Activated CD8-positive, alpha-beta T cell treated with anti-CD3 and anti-CD28 coated beads for 36 hours (primary cell): ENCODE measurements at regions of chr9 and their contacts with region 1.

Region 1: DNA sequence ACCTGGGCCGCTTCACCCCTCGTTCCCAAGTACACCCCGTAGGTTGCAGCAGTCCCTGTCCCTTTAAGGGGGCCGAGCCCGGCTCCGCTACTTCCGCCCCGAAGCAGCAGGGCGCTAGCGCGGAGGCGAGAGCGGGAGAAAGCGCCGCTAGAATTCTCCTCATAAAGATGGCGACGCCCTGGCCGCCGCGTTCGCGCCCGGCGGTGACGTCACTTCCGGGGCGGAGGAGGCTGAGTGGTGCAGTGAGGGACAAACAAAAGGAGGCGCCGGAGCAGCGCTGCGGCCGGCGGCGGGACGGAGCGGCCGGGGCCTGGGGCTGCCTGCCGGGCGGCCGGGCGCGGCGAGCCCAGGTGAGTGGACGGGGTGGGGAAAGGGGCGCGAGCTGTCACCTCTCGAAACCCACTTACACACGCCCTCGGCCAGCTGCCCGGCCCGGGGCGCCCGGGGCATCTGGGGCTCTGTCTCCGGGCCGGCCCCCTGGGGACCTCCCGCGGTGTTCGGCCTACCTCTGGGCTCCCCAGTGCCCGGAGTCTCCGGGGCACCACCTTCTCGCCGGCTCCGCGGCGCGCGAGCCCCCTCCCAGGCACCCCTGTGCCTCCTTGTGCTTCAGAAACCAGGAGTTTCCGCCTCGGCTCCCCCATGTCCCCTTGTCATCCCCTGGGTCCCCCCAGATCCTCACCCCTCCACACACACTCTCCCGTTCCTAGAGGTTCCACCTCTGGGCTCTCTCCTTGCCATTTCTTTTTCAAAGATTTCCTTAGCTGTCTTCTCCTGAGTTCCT is at the starts of genes KYAT1 and LRRC8A:
- DNase-seq: peak; percentile 99
- ATAC-seq: peak; percentile 93
- H3K4me3 Mint-ChIP-seq: peak within 1 kb of the TSS; percentile 87
- H3K27ac Mint-ChIP-seq: peak within 1 kb of the TSS; percentile 92
- H3K4me1 Mint-ChIP-seq: peaks cover 43% of the 10 kb centered on the region
- H3K27me3 Mint-ChIP-seq: no peaks in the 10 kb centered on the region
- CTCF ChIP-seq: no peak
- total RNA-seq, gene KYAT1: 17.0 to 18.6 TPM
- total RNA-seq, gene LRRC8A: 15.1 to 16.2 TPM

Region 2: GRCh38 chr9:128863647-128864046 is 18.4 kb before region 1 on chr9:
- CTCF ChIA-PET with region 1: interaction called, 12 read pairs
- POLR2A ChIA-PET with region 1: interaction called, 3 read pairs
- intact Hi-C with region 1: no loop called
- DNase-seq: peak; percentile 92
- ATAC-seq: peak; percentile 99
- H3K4me3 Mint-ChIP-seq: no peak overlapping the region
- H3K27ac Mint-ChIP-seq: peak overlapping the region; percentile 30
- H3K4me1 Mint-ChIP-seq: peaks cover 5% of the 10 kb centered on the region
- H3K27me3 Mint-ChIP-seq: no peaks in the 10 kb centered on the region
- CTCF ChIP-seq: peak; percentile 98

Region 3: DNA sequence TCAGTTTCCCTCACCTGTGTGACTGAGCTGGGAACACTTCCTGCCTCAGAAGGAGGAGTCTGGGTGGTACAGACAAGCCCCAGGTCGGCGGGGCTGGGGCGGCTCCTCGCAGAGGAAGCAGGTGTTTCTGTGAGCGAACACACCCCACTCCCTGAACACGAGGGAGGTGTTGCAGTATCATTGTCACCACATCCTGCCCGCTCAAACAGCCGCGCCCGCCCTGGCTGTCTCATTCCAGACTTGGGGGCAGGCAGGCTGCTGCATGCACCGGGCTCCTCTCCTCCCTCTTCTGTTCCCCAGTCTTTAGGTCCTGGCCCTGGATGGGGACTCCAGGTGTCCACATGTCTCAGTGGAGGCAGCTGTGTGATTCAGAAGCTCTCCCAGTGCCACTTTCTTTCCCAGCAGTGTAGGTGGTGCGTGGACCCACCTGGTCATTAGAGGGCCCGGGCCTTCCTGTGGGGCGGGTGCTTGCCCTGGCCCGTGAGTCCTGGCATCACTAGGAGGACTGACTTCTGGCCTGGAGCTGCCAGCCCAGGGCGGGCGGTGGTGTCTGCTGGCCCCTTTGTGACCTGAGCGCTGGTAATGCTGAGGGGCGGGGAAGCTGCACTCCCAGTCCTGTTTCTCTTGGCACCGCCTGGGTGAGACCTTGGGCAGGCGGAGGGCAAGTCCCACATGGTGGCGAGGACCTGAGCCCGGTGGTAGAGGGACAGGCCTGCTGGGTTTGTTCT is 20.4 kb after region 1 on chr9:
- CTCF ChIA-PET with region 1: interaction called, 3 read pairs
- POLR2A ChIA-PET with region 1: interaction called, 15 read pairs
- intact Hi-C with region 1: no loop called
- DNase-seq: peak; percentile 94
- ATAC-seq: peak; percentile 90
- H3K4me3 Mint-ChIP-seq: peak overlapping the region; percentile 51
- H3K27ac Mint-ChIP-seq: peak overlapping the region; percentile 91
- H3K4me1 Mint-ChIP-seq: peaks cover 64% of the 10 kb centered on the region
- H3K27me3 Mint-ChIP-seq: no peaks in the 10 kb centered on the region
- CTCF ChIP-seq: no peak